ENCODE measurements at regions of chr1 and their contacts with region 1.

Region 1: DNA sequence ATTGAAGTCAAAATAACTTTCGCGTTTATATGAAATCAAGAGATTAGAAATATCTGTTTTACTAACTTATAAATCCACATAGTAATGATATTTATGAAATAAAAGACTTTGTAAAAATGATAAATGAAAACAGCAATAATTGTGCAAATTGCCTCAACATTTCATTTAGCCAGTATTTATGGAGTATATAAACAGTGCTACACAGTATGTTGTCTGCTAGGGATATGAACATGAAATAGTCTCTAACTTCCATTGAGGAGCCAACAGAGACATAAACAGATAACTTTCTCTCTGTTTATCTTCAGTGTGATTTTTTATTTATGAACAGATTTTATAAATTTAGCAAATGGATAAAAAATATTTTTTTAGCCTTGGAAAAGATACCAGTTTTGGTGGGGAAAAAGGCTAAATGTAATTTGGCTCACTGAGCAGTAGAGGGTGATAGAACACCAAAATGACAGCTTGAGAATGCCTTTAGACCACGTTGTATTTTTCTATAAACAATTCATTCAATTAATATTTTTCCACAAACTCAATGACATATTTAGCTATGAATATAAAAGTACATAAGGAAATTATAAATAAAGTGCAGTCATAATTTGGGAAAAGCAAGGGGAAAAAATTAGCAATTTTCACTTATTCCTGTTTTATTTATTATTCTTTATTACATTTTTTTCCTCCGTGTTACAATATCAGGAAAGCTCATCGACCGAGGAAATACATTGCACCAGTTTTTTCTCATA is 47.5 kb upstream of the EEIG2 start:
- DNase-seq: peak; percentile 31 to 68 (median 48)
- ATAC-seq: peak; percentile 87
- H3K4me3 ChIP-seq: no peak overlapping the region
- H3K27ac ChIP-seq: no peak overlapping the region
- H3K4me1 ChIP-seq: no peaks in the 10 kb centered on the region
- H3K27me3 ChIP-seq: no peaks in the 10 kb centered on the region
- CTCF ChIP-seq: peak; percentile 77 to 99 (median 81)
- EP300 ChIP-seq: no peak
- POLR2A ChIP-seq: no peak
- RAD21 ChIP-seq: peak; percentile 100

Region 2: GRCh38 chr1:107782217-107782845 is 730.1 kb before region 1 on chr1:
- CTCF ChIA-PET with region 1: interaction called, 3 read pairs
- POLR2A ChIA-PET with region 1: no interaction called
- in situ Hi-C with region 1: no loop called
- intact Hi-C with region 1: loop called (anchors 5 kb)
- DNase-seq: peak; percentile 35 to 75 (median 57)
- ATAC-seq: peak; percentile 89
- H3K4me3 ChIP-seq: no peak overlapping the region
- H3K27ac ChIP-seq: no peak overlapping the region
- H3K4me1 ChIP-seq: no peaks in the 10 kb centered on the region
- H3K27me3 ChIP-seq: no peaks in the 10 kb centered on the region
- CTCF ChIP-seq: peak; percentile 58 to 84 (median 60); a peak in 5 of 6 replicates
- EP300 ChIP-seq: no peak
- POLR2A ChIP-seq: no peak
- RAD21 ChIP-seq: peak; percentile 92 to 95

Region 3: DNA sequence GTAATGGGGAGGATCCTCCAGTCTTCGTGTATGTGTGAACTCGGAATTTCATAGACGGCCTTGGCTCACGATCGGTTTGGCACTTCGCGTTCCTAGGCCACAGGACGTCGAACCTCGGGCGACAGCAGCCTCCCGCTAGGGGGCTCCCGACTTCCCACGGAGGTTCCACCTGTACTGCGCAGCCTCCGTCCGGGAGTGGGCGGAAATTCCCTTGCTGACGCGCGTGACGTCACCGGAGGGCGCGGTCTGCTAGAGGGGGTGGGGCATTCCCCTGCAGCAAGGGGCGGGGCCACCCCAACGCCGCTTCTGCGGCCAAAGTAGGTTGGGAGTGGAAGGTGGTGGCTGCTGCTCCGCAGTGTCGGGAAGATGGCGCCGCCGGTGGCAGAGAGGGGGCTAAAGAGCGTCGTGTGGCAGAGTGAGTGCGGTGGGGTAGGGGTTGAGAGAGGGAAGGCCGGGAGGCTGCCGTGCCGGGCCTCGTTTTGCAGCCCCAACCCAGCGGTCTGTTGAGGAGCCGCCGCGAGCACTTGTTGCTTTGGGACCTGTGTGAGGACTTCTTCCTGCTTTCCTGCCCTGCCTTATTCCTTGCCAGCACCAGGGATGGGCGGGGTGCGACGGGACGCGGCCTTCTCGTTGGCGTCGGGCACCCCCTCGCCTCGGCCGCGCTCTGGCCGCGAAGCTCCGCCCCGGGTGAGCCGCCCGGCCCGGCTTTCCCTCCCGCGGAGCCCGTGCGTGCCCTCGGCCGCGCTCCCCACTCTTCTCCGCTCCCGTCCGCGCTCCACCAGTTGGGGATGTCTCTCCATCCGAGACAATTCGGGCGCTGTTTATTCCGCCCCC is 234.2 kb after region 1 on chr1 and contains the start of gene STXBP3:
- CTCF ChIA-PET with region 1: no interaction called
- POLR2A ChIA-PET with region 1: no interaction called
- in situ Hi-C with region 1: no loop called
- intact Hi-C with region 1: no loop called
- DNase-seq: peak; percentile 99
- ATAC-seq: peak; percentile 94
- H3K4me3 ChIP-seq: peak within 1 kb of the TSS; percentile 81
- H3K27ac ChIP-seq: peak within 1 kb of the TSS; percentile 90
- H3K4me1 ChIP-seq: peaks cover 4 to 9% of the 10 kb centered on the region in 2 experiments; a peak in 4 of 5 replicates
- H3K27me3 ChIP-seq: no peaks in the 10 kb centered on the region
- CTCF ChIP-seq: peak; percentile 83 to 98 (median 94)
- EP300 ChIP-seq: peak; percentile 51
- POLR2A ChIP-seq: peak; percentile 99
- RAD21 ChIP-seq: peak; percentile 23 to 52
- polyA plus RNA-seq, gene STXBP3: 34.2 to 34.9 TPM

Measured in K562 (cell line).